ENCODE measurements at regions of chr2 and their contacts with region 1.

Region 1: GRCh38 chr2:195498176-195498575 is 158.8 kb upstream of the SLC39A10 start:
- DNase-seq: no peak
- ATAC-seq: peak; percentile 48

Region 2: GRCh38 chr2:195594248-195594647 is 96.1 kb after region 1 on chr2:
- intact Hi-C with region 1: no loop called
- DNase-seq: no peak
- ATAC-seq: no peak

Region 3: GRCh38 chr2:196068271-196069209 is 570.4 kb after region 1 on chr2 and contains the start of gene DNAH7:
- intact Hi-C with region 1: loop called (anchors 5 kb)
- DNase-seq: peak; percentile 95
- ATAC-seq: peak; percentile 99
- total RNA-seq, gene DNAH7: 0.40 TPM